Cardiac septum (tissue), 1 donor: ENCODE measurements at regions of chr6 and their contacts with region 1.

Region 1: DNA sequence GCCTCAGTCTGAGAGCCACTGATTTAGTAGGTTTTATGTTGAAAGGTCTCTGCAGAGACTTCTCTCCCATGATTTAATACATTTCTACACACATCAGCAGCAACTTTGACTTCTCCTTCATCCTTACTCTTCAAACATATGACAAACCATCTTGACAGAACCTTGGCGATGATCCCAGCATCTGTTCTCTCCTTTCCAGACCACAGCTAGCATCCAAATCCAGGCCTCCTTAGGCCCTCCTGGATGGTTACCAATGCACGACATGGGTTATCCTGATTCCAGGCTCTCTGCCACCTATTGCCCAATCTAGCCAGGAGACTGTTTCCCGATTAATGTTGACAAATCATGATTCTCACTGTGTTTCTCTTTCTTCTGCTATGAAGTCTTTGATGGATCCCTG is 16.8 kb downstream of the LAMA4 start:
- DNase-seq: peak; percentile 74

Region 2: DNA sequence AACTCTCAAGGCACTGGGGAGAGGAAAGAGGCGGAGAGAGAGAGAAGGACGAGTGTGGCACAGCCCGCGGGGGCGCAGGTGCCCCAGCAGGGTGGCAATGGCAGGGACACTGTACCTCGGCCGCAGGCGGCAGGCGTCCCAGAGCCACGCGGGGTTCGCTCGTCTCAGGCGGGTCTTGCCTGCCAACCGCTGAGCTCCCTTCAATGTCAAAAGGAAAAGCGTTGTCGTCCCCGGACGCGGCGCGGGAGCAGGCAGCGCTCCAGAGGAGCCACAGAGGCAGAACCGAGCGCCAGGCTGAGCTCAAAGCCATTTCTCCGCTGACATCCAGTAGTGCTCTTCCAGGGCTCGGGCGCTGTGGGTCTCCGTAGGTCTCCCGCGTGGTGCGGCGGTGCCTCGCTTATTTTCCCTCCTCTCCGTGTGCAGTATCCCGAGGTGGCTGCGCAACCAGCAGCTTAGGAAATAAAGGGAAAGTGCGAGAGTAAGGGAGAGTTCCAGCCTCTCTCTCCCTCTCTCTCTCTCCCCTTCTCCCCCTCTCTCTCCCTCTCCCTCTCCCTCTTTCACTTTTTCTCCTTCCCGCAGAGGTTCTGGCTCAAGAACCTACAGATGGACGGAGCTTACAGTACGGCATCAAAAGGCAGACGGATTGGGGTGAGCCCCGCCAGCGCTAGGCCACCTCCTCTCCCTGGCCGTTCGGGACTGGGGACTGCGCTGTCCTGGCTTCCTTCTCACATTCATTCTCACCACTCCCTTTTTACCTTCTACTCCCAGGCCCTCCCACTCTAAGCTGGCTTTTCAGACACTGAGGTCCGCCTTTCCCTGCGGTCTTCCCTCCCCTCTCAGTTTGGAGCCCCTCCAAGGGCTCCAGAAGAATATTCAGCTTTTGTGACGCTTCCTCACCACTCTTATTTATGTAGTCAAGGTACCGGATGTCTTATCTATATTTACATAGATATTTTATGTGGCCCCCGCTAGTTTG is 16.5 kb after region 1 on chr6 and contains the start of gene LAMA4:
- intact Hi-C with region 1: loop called (anchors 2 kb)
- DNase-seq: peak; percentile 85
- total RNA-seq, gene LAMA4: 93.9 TPM

Region 3: DNA sequence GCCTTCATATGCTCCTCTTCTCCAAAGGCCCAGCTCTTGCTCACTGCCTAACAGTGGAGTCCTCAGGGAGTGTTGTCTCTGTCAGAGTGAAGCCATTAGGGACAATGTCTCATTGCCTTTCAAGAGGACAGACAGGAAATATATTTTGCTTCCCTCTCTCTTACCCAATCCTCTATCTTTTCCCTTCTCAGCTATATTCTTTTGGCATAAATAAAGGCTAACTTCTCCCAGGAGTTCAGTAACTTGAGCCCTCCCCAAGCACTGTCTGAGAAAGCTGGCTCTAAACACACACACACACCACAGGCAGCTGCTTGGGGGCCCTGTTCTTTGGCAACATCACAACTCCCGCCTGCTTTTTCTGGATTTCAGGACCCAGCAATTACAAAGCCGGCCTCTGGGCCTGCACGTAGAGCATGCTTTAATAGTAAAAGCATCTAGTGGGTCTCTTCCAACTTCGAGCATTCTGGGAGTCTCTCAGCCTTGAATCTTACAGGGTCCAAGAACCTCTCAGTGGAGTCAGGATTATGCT is 51.5 kb after region 1 on chr6:
- intact Hi-C with region 1: loop called (anchors 5 kb)
- DNase-seq: peak; percentile 77